Naive thymus-derived CD8-positive, alpha-beta T cell (primary cell): ENCODE measurements at regions of chr19 and their contacts with region 1.

Region 1: GRCh38 chr19:47190167-47190727 is 40.8 kb downstream of the BBC3 start:
- DNase-seq: peak; percentile 19 to 69 (median 43)
- ATAC-seq: peak; percentile 29 to 44
- H3K4me3 Mint-ChIP-seq: peak overlapping the region in 9 of 10 donors; percentile 44 to 82 (median 64)
- H3K27ac Mint-ChIP-seq: peak overlapping the region; percentile 0 to 99 (median 96)
- H3K4me1 Mint-ChIP-seq: peaks cover 27 to 81% (median 67%) of the 10 kb centered on the region in 4 donors
- H3K27me3 Mint-ChIP-seq: no peaks in the 10 kb centered on the region

Region 2: GRCh38 chr19:47145639-47146486 is 44.4 kb before region 1 on chr19:
- POLR2A ChIA-PET with region 1: interaction called, 19 read pairs
- DNase-seq: peak in 8 of 10 donors; percentile 29 to 80 (median 49)
- ATAC-seq: peak; percentile 95 to 98
- H3K4me3 Mint-ChIP-seq: peak overlapping the region; percentile 55 to 83 (median 74)
- H3K27ac Mint-ChIP-seq: peak overlapping the region; percentile 82 to 94 (median 91)
- H3K4me1 Mint-ChIP-seq: peaks cover 28 to 82% (median 56%) of the 10 kb centered on the region in 4 donors
- H3K27me3 Mint-ChIP-seq: no peaks in the 10 kb centered on the region

Region 3: GRCh38 chr19:47152224-47153017 is 37.8 kb before region 1 on chr19:
- POLR2A ChIA-PET with region 1: interaction called, 185 read pairs
- DNase-seq: no peak
- ATAC-seq: no peak
- H3K4me3 Mint-ChIP-seq: no peak overlapping the region
- H3K27ac Mint-ChIP-seq: peak overlapping the region in 4 of 10 donors; percentile 21 to 69 (median 40)
- H3K4me1 Mint-ChIP-seq: peaks cover 16 to 71% (median 41%) of the 10 kb centered on the region in 4 donors
- H3K27me3 Mint-ChIP-seq: no peaks in the 10 kb centered on the region

Region 4: GRCh38 chr19:47157431-47158321 is 32.6 kb before region 1 on chr19:
- POLR2A ChIA-PET with region 1: interaction called, 185 read pairs
- DNase-seq: peak in 6 of 10 donors; percentile 4 to 52 (median 38)
- ATAC-seq: peak; percentile 21 to 23
- H3K4me3 Mint-ChIP-seq: peak overlapping the region; percentile 61 to 91 (median 82)
- H3K27ac Mint-ChIP-seq: peak overlapping the region; percentile 83 to 98 (median 93)
- H3K4me1 Mint-ChIP-seq: peaks cover 28 to 77% (median 65%) of the 10 kb centered on the region in 4 donors
- H3K27me3 Mint-ChIP-seq: no peaks in the 10 kb centered on the region

Region 5: GRCh38 chr19:47176627-47177090 is 13.6 kb before region 1 on chr19:
- POLR2A ChIA-PET with region 1: interaction called, 86 read pairs
- DNase-seq: peak in 8 of 10 donors; percentile 22 to 81 (median 42)
- ATAC-seq: peak; percentile 84 to 94
- H3K4me3 Mint-ChIP-seq: peak overlapping the region; percentile 49 to 88 (median 81)
- H3K27ac Mint-ChIP-seq: peak overlapping the region; percentile 90 to 99 (median 94)
- H3K4me1 Mint-ChIP-seq: peaks cover 30 to 78% (median 65%) of the 10 kb centered on the region in 4 donors
- H3K27me3 Mint-ChIP-seq: no peaks in the 10 kb centered on the region

Region 6: GRCh38 chr19:47210689-47211316 is 20.6 kb after region 1 on chr19:
- POLR2A ChIA-PET with region 1: interaction called, 31 read pairs
- DNase-seq: peak; percentile 58 to 87 (median 78)
- ATAC-seq: peak; percentile 74 to 89
- H3K4me3 Mint-ChIP-seq: peak overlapping the region in 6 of 10 donors; percentile 5 to 46 (median 23)
- H3K27ac Mint-ChIP-seq: peak overlapping the region; percentile 7 to 86 (median 80)
- H3K4me1 Mint-ChIP-seq: peaks cover 8 to 29% (median 17%) of the 10 kb centered on the region in 4 donors
- H3K27me3 Mint-ChIP-seq: no peaks in the 10 kb centered on the region